ENCODE measurements at regions of chr9 and their contacts with region 1.

Region 1: GRCh38 chr9:5593904-5594303 is 35.0 kb upstream of the RIC1 start:
- DNase-seq: no peak
- ATAC-seq: no peak
- H3K4me3 ChIP-seq: no peak overlapping the region
- H3K27ac ChIP-seq: no peak overlapping the region
- H3K4me1 ChIP-seq: peaks cover 0 to 21% (median 3%) of the 10 kb centered on the region in 12 donors
- H3K27me3 ChIP-seq: no peaks in the 10 kb centered on the region
- CTCF ChIP-seq: no peak
- POLR2A ChIP-seq: no peak

Region 2: GRCh38 chr9:4750023-4750673 is 843.8 kb before region 1 on chr9:
- intact Hi-C with region 1: loop called in 4 of 10 experiments (anchors 5 to 10 kb)
- DNase-seq: peak in 1 of 5 donors; percentile 37
- ATAC-seq: peak in 3 of 4 donors; percentile 42 to 77 (median 64)
- H3K4me3 ChIP-seq: no peak overlapping the region
- H3K27ac ChIP-seq: no peak overlapping the region
- H3K4me1 ChIP-seq: peaks cover 0 to 3% (median 0%) of the 10 kb centered on the region in 12 donors
- H3K27me3 ChIP-seq: no peaks in the 10 kb centered on the region
- CTCF ChIP-seq: peak; percentile 34 to 73 (median 58)
- POLR2A ChIP-seq: no peak

Region 3: DNA sequence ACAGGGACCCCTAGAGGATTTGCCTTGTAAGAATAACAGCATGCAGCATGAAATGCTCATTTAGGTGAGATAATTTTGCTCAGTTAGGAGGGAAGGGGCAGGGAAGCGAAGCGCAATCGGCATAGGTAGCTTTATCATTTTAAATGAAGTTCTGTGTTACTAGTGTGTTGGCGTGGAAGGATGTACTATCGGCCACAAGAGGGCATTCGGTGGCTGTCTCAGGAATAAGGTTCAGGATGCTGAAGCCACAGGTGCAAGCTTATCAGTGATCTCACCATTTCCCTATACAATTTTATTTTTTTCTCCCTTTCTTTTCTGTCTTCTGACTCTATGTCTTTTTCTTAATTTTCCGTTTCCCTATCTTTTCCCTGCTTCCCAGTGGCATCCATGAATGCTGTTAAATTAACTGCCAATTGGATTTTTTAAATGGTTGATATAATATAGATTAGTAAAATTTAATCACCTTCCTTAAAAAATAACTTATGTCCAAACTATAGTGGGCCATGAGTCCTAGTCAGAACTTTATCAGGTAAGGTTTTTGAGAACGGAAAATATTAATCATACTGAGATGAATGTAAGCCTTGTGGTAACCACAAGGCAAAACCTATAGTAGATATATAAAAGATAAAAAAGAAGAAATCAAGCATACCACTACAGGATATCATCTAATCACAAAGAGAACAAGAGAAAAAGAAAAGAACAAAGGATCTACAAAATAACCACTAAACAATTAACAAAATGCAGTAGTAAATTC is 407.3 kb before region 1 on chr9:
- intact Hi-C with region 1: loop called in 8 of 10 experiments (anchors 2 to 5 kb)
- DNase-seq: peak in 3 of 5 donors; percentile 27 to 32 (median 29)
- ATAC-seq: peak in 3 of 4 donors; percentile 70 to 76 (median 70)
- H3K4me3 ChIP-seq: no peak overlapping the region
- H3K27ac ChIP-seq: no peak overlapping the region
- H3K4me1 ChIP-seq: no peaks in the 10 kb centered on the region
- H3K27me3 ChIP-seq: peaks cover 0 to 8% (median 0%) of the 10 kb centered on the region in 9 donors
- CTCF ChIP-seq: peak; percentile 44 to 74 (median 69)
- POLR2A ChIP-seq: no peak

Region 4: GRCh38 chr9:5195453-5195852 is 398.5 kb before region 1 on chr9:
- intact Hi-C with region 1: loop called in 1 of 10 experiments (anchors 5 kb)
- DNase-seq: no peak
- ATAC-seq: no peak
- H3K4me3 ChIP-seq: no peak overlapping the region
- H3K27ac ChIP-seq: no peak overlapping the region
- H3K4me1 ChIP-seq: no peaks in the 10 kb centered on the region
- H3K27me3 ChIP-seq: no peaks in the 10 kb centered on the region
- CTCF ChIP-seq: no peak
- POLR2A ChIP-seq: no peak

Region 5: GRCh38 chr9:5364294-5365024 is 229.4 kb before region 1 on chr9:
- intact Hi-C with region 1: no loop called
- DNase-seq: no peak
- ATAC-seq: no peak
- H3K4me3 ChIP-seq: no peak overlapping the region
- H3K27ac ChIP-seq: no peak overlapping the region
- H3K4me1 ChIP-seq: peaks cover 0 to 14% (median 0%) of the 10 kb centered on the region in 12 donors
- H3K27me3 ChIP-seq: no peaks in the 10 kb centered on the region
- CTCF ChIP-seq: no peak
- POLR2A ChIP-seq: no peak

Region 6: DNA sequence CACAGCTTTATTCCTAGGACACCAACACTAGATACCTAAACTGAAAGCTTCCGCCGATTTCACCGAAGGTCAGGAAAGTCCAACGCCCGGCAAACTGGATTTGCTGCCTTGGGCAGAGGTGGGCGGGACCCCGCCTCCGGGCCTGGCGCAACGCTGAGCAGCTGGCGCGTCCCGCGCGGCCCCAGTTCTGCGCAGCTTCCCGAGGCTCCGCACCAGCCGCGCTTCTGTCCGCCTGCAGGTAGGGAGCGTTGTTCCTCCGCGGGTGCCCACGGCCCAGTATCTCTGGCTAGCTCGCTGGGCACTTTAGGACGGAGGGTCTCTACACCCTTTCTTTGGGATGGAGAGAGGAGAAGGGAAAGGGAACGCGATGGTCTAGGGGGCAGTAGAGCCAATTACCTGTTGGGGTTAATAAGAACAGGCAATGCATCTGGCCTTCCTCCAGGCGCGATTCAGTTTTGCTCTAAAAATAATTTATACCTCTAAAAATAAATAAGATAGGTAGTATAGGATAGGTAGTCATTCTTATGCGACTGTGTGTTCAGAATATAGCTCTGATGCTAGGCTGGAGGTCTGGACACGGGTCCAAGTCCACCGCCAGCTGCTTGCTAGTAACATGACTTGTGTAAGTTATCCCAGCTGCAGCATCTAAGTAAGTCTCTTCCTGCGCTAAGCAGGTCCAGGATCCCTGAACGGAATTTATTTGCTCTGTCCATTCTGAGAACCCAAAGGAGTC is 143.4 kb before region 1 on chr9 and contains the start of gene CD274:
- intact Hi-C with region 1: loop called (anchors 1 to 5 kb)
- DNase-seq: peak; percentile 90 to 95 (median 94)
- ATAC-seq: peak; percentile 96 to 99 (median 98)
- H3K4me3 ChIP-seq: peak within 1 kb of the TSS; percentile 7 to 83 (median 66)
- H3K27ac ChIP-seq: peak within 1 kb of the TSS; percentile 6 to 97 (median 80)
- H3K4me1 ChIP-seq: peaks cover 0 to 85% (median 21%) of the 10 kb centered on the region in 12 donors
- H3K27me3 ChIP-seq: no peaks in the 10 kb centered on the region
- CTCF ChIP-seq: peak; percentile 53 to 88 (median 66)
- POLR2A ChIP-seq: no peak
- total RNA-seq, gene CD274: 11.6 to 54.4 (median 15.7) TPM

Region 7: DNA sequence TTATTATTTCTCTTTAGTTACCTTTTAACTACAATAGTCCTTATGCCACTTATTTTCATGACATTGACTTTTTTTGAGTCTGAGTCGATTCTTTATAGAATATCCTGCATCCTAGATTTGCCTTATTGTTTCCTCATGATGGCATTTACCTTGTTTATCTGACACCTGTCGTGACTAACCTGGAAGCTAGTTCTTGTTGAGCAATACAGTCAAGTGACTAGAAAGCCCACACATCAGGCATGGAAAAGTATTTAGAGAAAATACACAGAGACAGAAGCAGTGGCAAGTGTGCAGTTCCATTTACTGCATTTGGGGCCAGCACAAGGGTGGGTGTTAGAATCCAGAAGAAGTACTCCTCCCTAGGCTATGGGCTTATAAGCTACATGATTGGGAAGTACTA is 141.2 kb after region 1 on chr9:
- intact Hi-C with region 1: no loop called
- DNase-seq: no peak
- ATAC-seq: no peak
- H3K4me3 ChIP-seq: no peak overlapping the region
- H3K27ac ChIP-seq: no peak overlapping the region
- H3K4me1 ChIP-seq: peaks cover 0 to 4% (median 0%) of the 10 kb centered on the region in 12 donors
- H3K27me3 ChIP-seq: no peaks in the 10 kb centered on the region
- CTCF ChIP-seq: no peak
- POLR2A ChIP-seq: no peak

Measured in heart left ventricle (tissue), 16 donors.